ENCODE measurements at regions of chr12 and their contacts with region 1.

Region 1: DNA sequence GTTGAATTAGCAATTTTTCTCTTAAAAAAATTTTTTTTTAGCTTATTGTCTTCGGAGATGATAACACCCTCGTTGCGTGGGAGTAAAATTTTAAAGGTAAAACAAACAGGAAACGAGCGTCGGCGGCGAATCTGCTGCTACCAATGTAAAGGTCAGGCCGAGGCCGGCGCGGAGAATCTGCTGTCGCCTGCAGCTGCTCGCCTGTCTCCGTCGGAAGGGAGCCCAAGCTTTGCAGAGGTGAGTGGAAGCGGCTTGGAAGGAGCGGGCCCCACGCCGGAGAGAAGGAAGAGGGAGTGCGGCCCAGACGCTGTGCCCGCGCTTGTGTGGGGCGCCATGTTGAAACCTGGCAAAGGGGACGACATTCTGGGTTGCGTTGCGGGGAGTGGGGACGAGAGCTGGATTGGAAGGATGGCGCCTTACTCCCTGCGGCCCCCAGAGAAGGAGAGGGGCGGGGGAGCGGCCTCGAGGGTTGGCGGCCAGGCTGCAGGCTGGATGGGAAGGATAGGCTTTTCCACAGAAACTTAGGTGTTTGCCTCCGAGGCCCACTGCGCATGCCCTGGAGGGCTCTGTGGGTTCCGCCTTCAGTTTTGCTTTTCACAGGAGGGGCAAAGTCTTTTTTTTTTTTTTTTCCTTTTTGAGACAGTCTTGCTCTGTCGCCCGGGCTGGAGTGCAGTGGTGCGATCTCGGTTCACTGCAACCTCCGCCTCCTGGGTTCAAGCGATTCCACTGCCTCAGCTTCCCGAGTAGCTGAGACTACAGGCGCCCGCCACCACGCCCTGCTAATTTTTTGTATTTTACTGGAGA is at the start of gene SNRNP35:
- DNase-seq: peak; percentile 88
- ATAC-seq: peak; percentile 73
- H3K4me3 Mint-ChIP-seq: peak within 1 kb of the TSS; percentile 98
- H3K27ac Mint-ChIP-seq: peak within 1 kb of the TSS; percentile 100
- H3K4me1 Mint-ChIP-seq: peaks cover 26% of the 10 kb centered on the region
- H3K27me3 Mint-ChIP-seq: no peaks in the 10 kb centered on the region
- total RNA-seq, gene SNRNP35: 24.1 to 24.8 TPM

Region 2: DNA sequence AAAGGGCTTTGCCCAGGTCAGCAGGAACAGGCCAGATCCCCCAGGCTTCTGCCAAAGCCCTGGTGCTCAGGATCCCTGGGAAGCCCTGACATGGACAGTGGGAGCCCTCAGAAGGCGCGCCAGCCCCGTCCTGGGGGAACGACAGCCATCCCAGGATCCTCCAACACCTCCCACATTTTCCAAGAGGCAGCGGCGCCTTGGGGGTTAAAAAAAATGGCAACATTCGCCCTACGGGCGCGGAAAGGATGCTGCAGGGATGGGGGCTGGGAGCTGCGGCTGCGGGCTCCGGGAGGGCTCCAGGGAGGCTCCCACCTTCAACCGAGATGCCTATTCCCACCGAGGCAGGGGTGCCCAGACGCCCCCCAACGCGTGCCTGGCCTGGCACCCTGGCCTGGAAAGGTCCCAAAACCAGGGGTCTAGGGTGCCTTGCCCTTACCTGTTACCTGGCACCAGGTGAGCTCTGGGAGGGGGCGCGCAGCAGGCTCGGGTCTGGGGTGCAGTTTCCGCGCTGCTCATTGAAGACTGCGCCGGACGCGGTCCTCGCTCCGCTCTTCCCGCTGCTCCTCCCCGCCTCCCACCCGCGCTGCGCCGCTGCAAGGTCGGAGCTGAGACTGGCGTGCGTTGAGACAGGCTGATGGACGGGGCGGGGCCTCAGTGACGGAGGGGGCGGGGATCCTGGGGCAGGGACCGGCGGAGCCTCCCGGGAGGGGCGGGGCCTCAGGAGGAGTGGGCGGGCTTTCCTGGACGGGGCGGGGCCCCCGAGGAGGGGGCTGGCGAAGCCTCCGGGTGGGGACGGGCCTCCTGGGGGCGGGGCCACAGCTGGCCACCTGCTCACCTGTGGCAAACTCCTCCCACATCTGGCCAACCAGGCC is 492.1 kb before region 1 on chr12 and contains the start of gene ABCB9:
- CTCF ChIA-PET with region 1: no interaction called
- POLR2A ChIA-PET with region 1: no interaction called
- intact Hi-C with region 1: loop called in 1 of 2 experiments (anchors 5 kb)
- DNase-seq: peak; percentile 99
- ATAC-seq: peak; percentile 99
- H3K4me3 Mint-ChIP-seq: peak within 1 kb of the TSS; percentile 63
- H3K27ac Mint-ChIP-seq: peak within 1 kb of the TSS; percentile 42
- H3K4me1 Mint-ChIP-seq: peaks cover 2% of the 10 kb centered on the region
- H3K27me3 Mint-ChIP-seq: no peaks in the 10 kb centered on the region
- total RNA-seq, gene ABCB9: 3.8 to 6.3 TPM

Region 3: GRCh38 chr12:123533672-123534643 is 75.8 kb after region 1 on chr12 and contains the start of gene RILPL1:
- CTCF ChIA-PET with region 1: no interaction called
- POLR2A ChIA-PET with region 1: no interaction called
- intact Hi-C with region 1: loop called in 1 of 2 experiments (anchors 2 kb)
- DNase-seq: peak; percentile 63
- ATAC-seq: peak; percentile 64
- H3K4me3 Mint-ChIP-seq: peak within 1 kb of the TSS; percentile 78
- H3K27ac Mint-ChIP-seq: peak within 1 kb of the TSS; percentile 74
- H3K4me1 Mint-ChIP-seq: peaks cover 23% of the 10 kb centered on the region
- H3K27me3 Mint-ChIP-seq: peaks cover 3% of the 10 kb centered on the region
- total RNA-seq, gene RILPL1: 4.7 to 5.3 TPM

Measured in activated CD4-positive, alpha-beta T cell treated with anti-CD3 and anti-CD28 coated beads for 36 hours (primary cell).